ENCODE measurements at regions of chr11 and their contacts with region 1.

Region 1: DNA sequence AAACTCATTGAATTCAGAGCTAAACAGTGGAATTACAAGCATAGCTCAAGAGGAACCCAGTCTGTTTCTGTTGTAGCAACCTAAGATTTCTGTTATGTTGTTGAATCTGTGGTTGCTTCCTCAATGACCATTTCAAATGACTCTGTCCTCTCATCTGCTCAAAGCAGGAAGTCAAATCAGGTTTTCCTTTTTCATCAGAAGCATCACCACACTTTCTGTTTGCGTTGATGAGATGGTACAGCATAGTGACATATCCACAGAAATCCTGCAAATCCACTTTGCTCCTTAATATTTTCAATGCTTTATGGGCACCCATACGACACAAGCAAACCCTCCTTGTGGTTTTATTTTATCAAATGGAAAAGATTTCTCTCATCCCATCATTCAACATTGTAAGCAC is 12.6 kb upstream of the UCP2 start:
- DNase-seq: peak in 8 of 9 donors; percentile 16 to 93 (median 90)
- ATAC-seq: peak; percentile 85
- H3K4me3 ChIP-seq: peak overlapping the region; percentile 4
- H3K4me3 Mint-ChIP-seq: peak overlapping the region; percentile 65 to 92 (median 80)
- H3K27ac ChIP-seq: peak overlapping the region; percentile 92
- H3K27ac Mint-ChIP-seq: peak overlapping the region; percentile 93 to 100 (median 97)
- H3K4me1 ChIP-seq: peaks cover 33 to 45% of the 10 kb centered on the region in 2 donors
- H3K4me1 Mint-ChIP-seq: peaks cover 26 to 81% (median 71%) of the 10 kb centered on the region in 7 donors
- H3K27me3 ChIP-seq: no peaks in the 10 kb centered on the region
- H3K27me3 Mint-ChIP-seq: no peaks in the 10 kb centered on the region

Region 2: DNA sequence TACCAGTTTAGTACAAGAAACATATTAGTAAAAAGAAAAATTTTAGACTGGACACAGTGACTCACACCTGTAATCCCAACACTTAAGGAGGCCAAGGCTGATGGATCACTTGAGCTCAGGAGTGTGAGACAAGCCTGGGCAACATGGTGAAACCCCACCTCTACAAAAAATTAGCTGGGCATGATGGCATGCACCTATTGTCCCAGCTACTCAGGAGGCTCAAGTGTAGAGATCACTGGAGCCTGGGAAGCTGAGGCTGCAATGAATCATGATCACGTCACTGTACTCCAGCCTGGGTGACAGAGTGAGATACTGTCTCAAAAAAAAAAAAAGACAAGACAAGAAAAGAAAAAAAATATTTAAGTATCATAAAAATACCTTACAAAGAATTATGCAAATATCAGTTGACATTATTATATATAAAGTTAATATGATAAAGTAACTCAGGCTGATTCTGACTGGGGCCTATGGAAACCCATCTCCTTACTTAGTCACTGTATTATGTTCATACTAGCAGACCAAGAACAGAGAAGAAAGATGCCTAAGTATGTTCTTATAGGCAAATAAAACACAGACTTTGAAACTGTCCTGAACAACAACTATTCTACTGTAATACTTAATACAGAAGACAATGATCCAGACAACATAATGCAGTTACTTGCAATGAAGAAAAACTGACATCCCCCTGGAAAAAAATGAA is 424.7 kb before region 1 on chr11:
- CTCF ChIA-PET with region 1: no interaction called
- POLR2A ChIA-PET with region 1: no interaction called
- intact Hi-C with region 1: no loop called
- DNase-seq: no peak
- ATAC-seq: no peak
- H3K4me3 ChIP-seq: no peak overlapping the region
- H3K4me3 Mint-ChIP-seq: no peak overlapping the region
- H3K27ac ChIP-seq: no peak overlapping the region
- H3K27ac Mint-ChIP-seq: no peak overlapping the region
- H3K4me1 ChIP-seq: no peaks in the 10 kb centered on the region
- H3K4me1 Mint-ChIP-seq: peaks cover 0 to 15% (median 7%) of the 10 kb centered on the region in 7 donors
- H3K27me3 ChIP-seq: no peaks in the 10 kb centered on the region
- H3K27me3 Mint-ChIP-seq: no peaks in the 10 kb centered on the region

Region 3: GRCh38 chr11:73693899-73694525 is 301.2 kb before region 1 on chr11:
- CTCF ChIA-PET with region 1: no interaction called
- POLR2A ChIA-PET with region 1: no interaction called
- intact Hi-C with region 1: no loop called
- DNase-seq: no peak
- ATAC-seq: no peak
- H3K4me3 ChIP-seq: no peak overlapping the region
- H3K4me3 Mint-ChIP-seq: no peak overlapping the region
- H3K27ac ChIP-seq: no peak overlapping the region
- H3K27ac Mint-ChIP-seq: no peak overlapping the region
- H3K4me1 ChIP-seq: no peaks in the 10 kb centered on the region
- H3K4me1 Mint-ChIP-seq: no peaks in the 10 kb centered on the region
- H3K27me3 ChIP-seq: no peaks in the 10 kb centered on the region
- H3K27me3 Mint-ChIP-seq: no peaks in the 10 kb centered on the region

Region 4: GRCh38 chr11:74011360-74012073 is 16.3 kb after region 1 on chr11:
- CTCF ChIA-PET with region 1: interaction called, 4 read pairs
- POLR2A ChIA-PET with region 1: interaction called, 88 read pairs
- intact Hi-C with region 1: loop called (anchors 1 to 2 kb)
- DNase-seq: peak in 8 of 9 donors; percentile 16 to 67 (median 46)
- ATAC-seq: peak; percentile 84
- H3K4me3 ChIP-seq: no peak overlapping the region
- H3K4me3 Mint-ChIP-seq: peak overlapping the region; percentile 55 to 81 (median 66)
- H3K27ac ChIP-seq: peak overlapping the region; percentile 61
- H3K27ac Mint-ChIP-seq: peak overlapping the region; percentile 80 to 98 (median 94)
- H3K4me1 ChIP-seq: peaks cover 83 to 95% of the 10 kb centered on the region in 2 donors
- H3K4me1 Mint-ChIP-seq: peaks cover 46 to 99% (median 87%) of the 10 kb centered on the region in 7 donors
- H3K27me3 ChIP-seq: no peaks in the 10 kb centered on the region
- H3K27me3 Mint-ChIP-seq: no peaks in the 10 kb centered on the region

Region 5: GRCh38 chr11:74791333-74792100 is 796.3 kb after region 1 on chr11:
- CTCF ChIA-PET with region 1: no interaction called
- POLR2A ChIA-PET with region 1: no interaction called
- intact Hi-C with region 1: no loop called
- DNase-seq: no peak
- ATAC-seq: no peak
- H3K4me3 ChIP-seq: no peak overlapping the region
- H3K4me3 Mint-ChIP-seq: no peak overlapping the region
- H3K27ac ChIP-seq: no peak overlapping the region
- H3K27ac Mint-ChIP-seq: no peak overlapping the region
- H3K4me1 ChIP-seq: no peaks in the 10 kb centered on the region
- H3K4me1 Mint-ChIP-seq: peaks cover 0 to 16% (median 9%) of the 10 kb centered on the region in 7 donors
- H3K27me3 ChIP-seq: no peaks in the 10 kb centered on the region
- H3K27me3 Mint-ChIP-seq: no peaks in the 10 kb centered on the region

Measured in naive thymus-derived CD4-positive, alpha-beta T cell (primary cell).